Aorta (tissue), 5 donors: ENCODE measurements at regions of chr2 and their contacts with region 1.

Region 1: GRCh38 chr2:236512902-236513435 is 56.7 kb upstream of the ACKR3 start:
- DNase-seq: peak; percentile 71 to 85
- ATAC-seq: peak; percentile 81
- H3K4me3 ChIP-seq: no peak overlapping the region
- H3K27ac ChIP-seq: no peak overlapping the region
- H3K4me1 ChIP-seq: peaks cover 0 to 1% of the 10 kb centered on the region in 2 donors
- H3K27me3 ChIP-seq: no peaks in the 10 kb centered on the region

Region 2: DNA sequence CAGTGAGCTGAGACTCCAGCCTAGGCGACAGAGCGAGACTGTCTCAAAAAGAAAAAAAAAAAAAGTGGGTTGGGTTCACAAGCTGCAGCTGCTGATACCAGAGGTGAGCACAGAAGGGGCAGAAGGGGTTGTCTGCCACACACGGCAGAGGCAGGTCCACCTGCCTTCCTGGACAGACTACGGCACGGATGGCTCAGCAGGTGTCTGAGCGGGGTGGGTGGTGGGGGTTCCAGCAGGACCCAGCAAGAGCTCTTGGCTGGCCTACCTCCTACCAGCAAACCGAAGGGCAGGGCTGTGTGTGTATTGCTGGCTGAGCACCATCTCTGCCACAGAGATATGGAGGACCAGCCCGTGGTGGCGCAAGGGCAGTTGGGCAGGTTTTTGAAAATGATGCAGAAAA is 118.4 kb before region 1 on chr2:
- intact Hi-C with region 1: no loop called
- DNase-seq: no peak
- ATAC-seq: no peak
- H3K4me3 ChIP-seq: no peak overlapping the region
- H3K27ac ChIP-seq: no peak overlapping the region
- H3K4me1 ChIP-seq: no peaks in the 10 kb centered on the region
- H3K27me3 ChIP-seq: no peaks in the 10 kb centered on the region

Region 3: DNA sequence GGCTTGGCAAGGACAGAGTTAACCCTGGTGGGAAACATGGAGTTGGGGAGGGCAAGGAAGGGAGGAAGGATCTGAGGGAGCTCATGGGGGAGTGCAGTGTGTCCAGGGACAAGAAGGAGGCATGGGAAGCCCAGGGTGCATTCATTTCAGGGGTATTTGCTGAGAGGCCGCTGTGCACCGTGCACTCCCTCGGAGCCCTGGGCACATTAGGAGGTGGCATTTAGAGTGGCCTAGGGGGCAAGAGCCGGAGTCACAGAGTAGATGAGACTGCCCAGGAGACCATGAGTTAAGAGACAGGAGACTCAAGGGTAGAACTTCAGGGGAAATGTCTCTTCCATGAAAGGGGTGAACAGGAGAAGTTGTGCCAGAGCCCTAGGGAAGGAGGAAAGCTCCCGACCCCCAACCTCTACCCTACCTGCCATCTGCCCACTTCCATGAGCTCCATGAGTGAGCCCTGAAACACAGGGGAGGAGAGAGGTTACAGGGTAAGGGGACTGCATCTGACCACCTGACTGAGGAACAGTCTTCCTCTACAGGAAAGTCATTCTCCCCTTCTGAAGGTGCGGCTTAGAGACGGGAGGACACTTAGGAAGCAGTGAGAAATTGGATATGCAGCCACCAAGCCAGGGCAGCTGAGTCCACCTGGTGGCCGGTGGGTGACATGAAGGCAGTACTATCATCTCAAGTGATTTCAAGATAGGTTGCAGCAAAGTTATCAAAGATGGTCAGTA is 514.2 kb after region 1 on chr2:
- intact Hi-C with region 1: loop called (anchors 1 to 5 kb)
- DNase-seq: peak; percentile 80 to 88
- ATAC-seq: peak; percentile 86
- H3K4me3 ChIP-seq: no peak overlapping the region
- H3K27ac ChIP-seq: no peak overlapping the region
- H3K4me1 ChIP-seq: no peaks in the 10 kb centered on the region
- H3K27me3 ChIP-seq: no peaks in the 10 kb centered on the region